Heart left ventricle (tissue), 16 donors: ENCODE measurements at regions of chr10 and their contacts with region 1.

Region 1: DNA sequence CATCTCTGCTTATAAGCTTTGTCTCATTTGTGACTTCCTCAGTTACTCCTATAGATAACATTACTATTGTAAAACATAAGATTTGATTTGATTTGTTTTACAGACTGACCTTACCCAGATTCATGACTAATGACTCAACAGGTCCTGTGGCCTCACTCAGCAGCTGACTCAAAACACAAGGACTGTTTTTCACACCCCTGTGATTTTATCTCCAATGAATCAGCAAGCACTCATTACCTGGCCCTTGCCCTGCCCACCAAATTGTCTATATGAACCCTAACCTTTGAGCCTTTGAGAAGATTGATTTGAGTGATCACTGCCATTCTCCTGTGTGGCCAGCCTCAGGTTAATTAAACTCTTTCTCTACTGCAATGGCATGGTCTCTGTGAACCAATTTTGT is 1064.6 kb upstream of the LRRTM3 start:
- DNase-seq: no peak
- ATAC-seq: no peak
- H3K4me3 ChIP-seq: no peak overlapping the region
- H3K27ac ChIP-seq: no peak overlapping the region
- H3K4me1 ChIP-seq: no peaks in the 10 kb centered on the region
- H3K27me3 ChIP-seq: no peaks in the 10 kb centered on the region
- CTCF ChIP-seq: no peak
- POLR2A ChIP-seq: no peak

Region 2: GRCh38 chr10:65313406-65313805 is 547.8 kb before region 1 on chr10:
- intact Hi-C with region 1: no loop called
- DNase-seq: no peak
- ATAC-seq: no peak
- H3K4me3 ChIP-seq: no peak overlapping the region
- H3K27ac ChIP-seq: no peak overlapping the region
- H3K4me1 ChIP-seq: no peaks in the 10 kb centered on the region
- H3K27me3 ChIP-seq: no peaks in the 10 kb centered on the region
- CTCF ChIP-seq: no peak
- POLR2A ChIP-seq: no peak

Region 3: DNA sequence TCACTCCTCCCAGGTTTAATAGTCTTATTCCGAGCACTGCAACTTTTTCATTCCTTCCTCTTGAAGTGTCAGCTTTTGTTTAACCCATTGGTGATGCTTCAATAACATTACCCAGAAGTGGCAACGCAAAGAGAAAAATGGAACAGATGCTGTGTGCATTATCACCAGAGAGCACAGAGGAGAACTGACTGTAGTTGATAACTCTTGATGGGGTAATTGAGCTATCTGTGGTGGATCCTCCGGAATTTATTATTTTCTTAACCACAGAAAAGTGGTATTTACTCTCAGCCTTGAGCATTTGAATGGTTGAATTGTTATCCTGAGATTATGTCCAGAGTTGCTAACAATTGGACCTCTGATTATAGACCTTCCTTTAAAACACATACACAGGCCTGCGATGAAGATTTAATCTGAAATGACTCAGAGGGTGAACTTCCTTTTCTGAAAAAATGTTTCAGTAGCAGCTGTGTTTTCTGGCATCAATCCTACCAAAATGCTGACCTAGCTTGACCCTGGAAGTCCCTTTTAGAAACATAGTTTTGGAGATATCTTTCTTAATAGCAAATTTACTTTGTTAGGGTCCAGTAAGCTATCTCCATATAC is 519.8 kb before region 1 on chr10:
- intact Hi-C with region 1: loop called in 1 of 10 experiments (anchors 5 kb)
- DNase-seq: peak in 3 of 5 donors; percentile 24 to 60 (median 39)
- ATAC-seq: peak in 3 of 4 donors; percentile 85 to 95 (median 91)
- H3K4me3 ChIP-seq: no peak overlapping the region
- H3K27ac ChIP-seq: peak overlapping the region in 9 of 12 donors; percentile 3 to 52 (median 31)
- H3K4me1 ChIP-seq: peaks cover 0 to 32% (median 14%) of the 10 kb centered on the region in 12 donors
- H3K27me3 ChIP-seq: peaks cover 0 to 3% (median 0%) of the 10 kb centered on the region in 9 donors
- CTCF ChIP-seq: no peak
- POLR2A ChIP-seq: no peak